ENCODE measurements at regions of chr5 and their contacts with region 1.

Region 1: DNA sequence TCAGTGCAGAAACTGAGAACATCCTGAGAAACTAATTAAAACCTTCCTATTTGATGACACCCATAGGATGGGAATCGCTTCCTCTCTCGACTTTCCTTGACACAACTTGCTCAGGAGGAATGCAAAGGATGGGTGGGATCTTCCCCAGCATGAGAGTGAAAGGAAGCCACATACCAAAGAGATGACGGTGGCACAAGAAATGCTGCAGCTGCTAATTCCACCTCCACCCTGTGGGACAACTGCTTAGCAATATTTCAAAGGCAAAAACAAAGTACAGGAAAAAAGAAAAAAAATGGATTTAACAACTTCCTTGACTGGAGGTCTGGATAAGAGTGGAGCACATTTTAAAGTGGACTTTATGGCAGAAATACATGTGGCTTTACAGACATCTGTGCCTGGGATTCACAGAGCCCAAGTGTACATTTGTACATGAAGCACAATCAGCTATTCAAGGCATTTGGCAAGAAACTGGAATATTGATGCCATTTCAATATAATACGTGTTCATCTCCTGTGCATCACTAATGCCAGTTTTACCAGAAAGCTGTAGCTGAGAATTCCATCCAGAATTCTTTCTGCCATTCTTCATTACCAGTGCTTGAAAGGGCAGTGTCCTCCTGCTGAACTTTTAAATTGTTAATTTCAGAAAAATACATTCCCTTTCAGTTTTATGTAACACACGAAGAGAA is 359.2 kb upstream of the ACTBL2 start:
- DNase-seq: peak; percentile 96
- H3K4me3 ChIP-seq: no peak overlapping the region
- H3K27ac ChIP-seq: peak overlapping the region; percentile 90
- H3K4me1 ChIP-seq: peaks cover 66% of the 10 kb centered on the region
- H3K27me3 ChIP-seq: no peaks in the 10 kb centered on the region
- CTCF ChIP-seq: no peak
- POLR2A ChIP-seq: no peak

Region 2: DNA sequence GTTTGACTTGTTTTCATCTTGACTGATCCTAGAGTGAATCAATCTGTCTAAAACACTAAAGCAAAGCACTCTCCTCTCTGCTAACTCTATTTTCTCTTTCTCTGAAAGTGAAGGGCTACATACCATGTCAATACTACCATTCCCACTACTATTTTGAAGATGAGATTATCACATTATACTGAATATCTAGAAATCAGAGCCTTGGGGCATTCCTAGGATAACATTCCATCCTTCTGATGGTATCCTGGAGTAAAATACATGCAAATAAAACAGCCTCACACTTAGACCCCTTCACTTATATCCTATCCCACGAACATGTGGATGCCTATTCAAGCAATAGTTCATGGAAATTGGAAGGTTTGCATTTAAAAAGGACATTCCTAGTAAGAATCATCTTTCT is 49.9 kb before region 1 on chr5:
- CTCF ChIA-PET with region 1: no interaction called
- POLR2A ChIA-PET with region 1: no interaction called
- dilution Hi-C with region 1: no loop called
- intact Hi-C with region 1: no loop called
- DNase-seq: no peak
- H3K4me3 ChIP-seq: no peak overlapping the region
- H3K27ac ChIP-seq: no peak overlapping the region
- H3K4me1 ChIP-seq: no peaks in the 10 kb centered on the region
- H3K27me3 ChIP-seq: no peaks in the 10 kb centered on the region
- CTCF ChIP-seq: no peak
- POLR2A ChIP-seq: no peak

Region 3: DNA sequence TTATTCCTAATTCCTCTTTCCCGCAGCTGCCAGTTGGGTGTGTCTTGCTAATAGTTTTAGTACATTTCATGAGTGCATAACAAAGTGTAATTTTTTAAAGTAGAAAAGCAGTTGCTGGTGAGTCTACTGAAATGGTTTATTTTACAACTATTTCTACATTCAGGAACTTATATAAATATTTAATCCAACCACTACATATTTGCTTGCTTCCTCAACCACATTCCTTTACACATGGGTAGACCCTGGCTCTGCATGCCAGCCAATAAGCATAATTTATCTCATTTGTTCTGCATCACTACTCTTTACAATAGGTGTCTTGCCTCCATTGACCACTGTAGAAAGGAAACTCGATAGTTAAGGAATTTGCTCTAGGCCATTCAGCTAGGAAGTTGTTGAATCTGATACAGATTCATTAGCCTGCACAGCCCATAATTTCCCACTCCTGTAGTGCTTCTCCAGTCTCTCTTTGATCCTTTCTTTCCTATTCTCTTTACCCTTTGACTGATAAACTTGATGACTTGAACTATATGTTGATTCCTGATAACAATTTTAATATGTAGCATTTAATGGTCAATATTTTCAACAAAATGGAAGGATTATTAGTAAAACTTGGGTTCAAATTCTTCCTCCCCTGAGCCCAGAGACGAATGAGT is 16.7 kb before region 1 on chr5:
- CTCF ChIA-PET with region 1: no interaction called
- POLR2A ChIA-PET with region 1: no interaction called
- dilution Hi-C with region 1: no loop called
- intact Hi-C with region 1: no loop called
- DNase-seq: peak; percentile 37
- H3K4me3 ChIP-seq: no peak overlapping the region
- H3K27ac ChIP-seq: no peak overlapping the region
- H3K4me1 ChIP-seq: no peaks in the 10 kb centered on the region
- H3K27me3 ChIP-seq: no peaks in the 10 kb centered on the region
- CTCF ChIP-seq: no peak
- POLR2A ChIP-seq: no peak

Region 4: GRCh38 chr5:57871496-57871895 is 29.7 kb after region 1 on chr5:
- CTCF ChIA-PET with region 1: no interaction called
- POLR2A ChIA-PET with region 1: no interaction called
- dilution Hi-C with region 1: no loop called
- intact Hi-C with region 1: no loop called
- DNase-seq: no peak
- H3K4me3 ChIP-seq: no peak overlapping the region
- H3K27ac ChIP-seq: no peak overlapping the region
- H3K4me1 ChIP-seq: no peaks in the 10 kb centered on the region
- H3K27me3 ChIP-seq: no peaks in the 10 kb centered on the region
- CTCF ChIP-seq: no peak
- POLR2A ChIP-seq: no peak

Region 5: GRCh38 chr5:58452566-58453258 is 610.9 kb after region 1 on chr5:
- CTCF ChIA-PET with region 1: no interaction called
- POLR2A ChIA-PET with region 1: interaction called, 4 read pairs
- dilution Hi-C with region 1: no loop called
- intact Hi-C with region 1: loop called (anchors 1 kb)
- DNase-seq: peak; percentile 55
- H3K4me3 ChIP-seq: no peak overlapping the region
- H3K27ac ChIP-seq: no peak overlapping the region
- H3K4me1 ChIP-seq: peaks cover 32% of the 10 kb centered on the region
- H3K27me3 ChIP-seq: no peaks in the 10 kb centered on the region
- CTCF ChIP-seq: no peak
- POLR2A ChIP-seq: no peak

Measured in endothelial cell of umbilical vein (primary cell).